ENCODE measurements at regions of chr20 and their contacts with region 1.

Region 1: GRCh38 chr20:49610701-49611538 is 43.0 kb upstream of the PTGIS start:
- H3K4me3 ChIP-seq: peak overlapping the region; percentile 21
- H3K27ac ChIP-seq: no peak overlapping the region
- H3K4me1 ChIP-seq: no peaks in the 10 kb centered on the region
- CTCF ChIP-seq: peak; percentile 100

Region 2: GRCh38 chr20:49534255-49534712 is 76.6 kb before region 1 on chr20:
- CTCF ChIA-PET with region 1: interaction called, 297 read pairs
- POLR2A ChIA-PET with region 1: no interaction called
- H3K4me3 ChIP-seq: no peak overlapping the region
- H3K27ac ChIP-seq: no peak overlapping the region
- H3K4me1 ChIP-seq: no peaks in the 10 kb centered on the region
- CTCF ChIP-seq: 0 out of 2 replicates have a peak, but pooled peaks have one; percentile 32

Region 3: DNA sequence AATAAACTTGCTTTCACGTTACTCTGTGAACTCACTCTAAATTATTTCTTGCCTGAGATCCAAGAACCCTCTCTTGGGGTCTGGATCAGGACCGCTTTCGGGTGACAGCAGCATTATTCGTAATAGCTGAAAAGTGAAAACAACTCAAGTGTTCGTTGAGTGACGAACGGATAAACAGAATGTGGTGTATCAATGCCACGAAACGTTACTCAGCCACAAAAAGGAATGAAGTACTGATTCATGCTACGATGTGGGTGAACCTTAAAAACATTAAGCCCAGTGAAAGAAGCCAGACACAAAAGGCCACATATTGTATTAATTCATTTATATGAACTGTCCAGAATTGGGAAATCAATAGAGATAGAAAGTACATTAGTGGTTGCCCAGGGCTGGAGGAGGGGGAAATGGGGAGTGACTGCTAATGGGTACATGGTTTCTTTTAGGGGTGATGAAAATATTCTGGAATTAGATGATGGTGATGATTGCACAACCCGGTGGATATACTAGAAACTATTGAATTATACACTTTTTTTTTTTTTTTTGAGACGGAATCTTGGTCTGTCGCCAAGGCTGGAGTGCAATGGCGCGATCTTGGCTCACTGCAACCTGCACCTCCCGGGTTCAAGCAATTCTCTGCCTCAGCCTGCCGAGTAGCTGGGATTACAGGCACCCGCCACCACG is 51.4 kb before region 1 on chr20:
- CTCF ChIA-PET with region 1: interaction called, 18 read pairs
- POLR2A ChIA-PET with region 1: no interaction called
- H3K4me3 ChIP-seq: no peak overlapping the region
- H3K27ac ChIP-seq: no peak overlapping the region
- H3K4me1 ChIP-seq: no peaks in the 10 kb centered on the region
- CTCF ChIP-seq: no peak

Region 4: DNA sequence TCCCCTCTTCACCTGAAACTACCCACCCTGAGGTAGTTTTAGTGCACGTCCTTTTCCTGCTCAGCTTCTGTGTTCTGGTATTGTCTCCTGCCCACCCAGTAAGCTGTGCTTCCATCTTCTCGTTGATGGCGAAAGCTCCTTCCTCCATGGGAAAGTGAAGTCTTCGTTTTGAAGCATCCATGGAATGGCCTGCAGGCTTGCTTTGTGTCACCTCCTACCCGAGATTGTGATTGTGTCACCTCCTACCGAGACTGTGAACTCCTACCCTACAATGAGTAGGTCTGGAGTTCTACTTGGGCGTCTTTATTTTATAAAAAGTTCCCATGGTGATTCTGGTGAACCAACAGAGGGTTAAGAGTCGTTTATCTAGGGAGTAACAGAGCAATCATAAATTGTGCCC is 227.6 kb after region 1 on chr20:
- CTCF ChIA-PET with region 1: interaction called, 13 read pairs
- POLR2A ChIA-PET with region 1: interaction called, 3 read pairs
- H3K4me3 ChIP-seq: no peak overlapping the region
- H3K27ac ChIP-seq: no peak overlapping the region
- H3K4me1 ChIP-seq: no peaks in the 10 kb centered on the region
- CTCF ChIP-seq: no peak

Region 5: DNA sequence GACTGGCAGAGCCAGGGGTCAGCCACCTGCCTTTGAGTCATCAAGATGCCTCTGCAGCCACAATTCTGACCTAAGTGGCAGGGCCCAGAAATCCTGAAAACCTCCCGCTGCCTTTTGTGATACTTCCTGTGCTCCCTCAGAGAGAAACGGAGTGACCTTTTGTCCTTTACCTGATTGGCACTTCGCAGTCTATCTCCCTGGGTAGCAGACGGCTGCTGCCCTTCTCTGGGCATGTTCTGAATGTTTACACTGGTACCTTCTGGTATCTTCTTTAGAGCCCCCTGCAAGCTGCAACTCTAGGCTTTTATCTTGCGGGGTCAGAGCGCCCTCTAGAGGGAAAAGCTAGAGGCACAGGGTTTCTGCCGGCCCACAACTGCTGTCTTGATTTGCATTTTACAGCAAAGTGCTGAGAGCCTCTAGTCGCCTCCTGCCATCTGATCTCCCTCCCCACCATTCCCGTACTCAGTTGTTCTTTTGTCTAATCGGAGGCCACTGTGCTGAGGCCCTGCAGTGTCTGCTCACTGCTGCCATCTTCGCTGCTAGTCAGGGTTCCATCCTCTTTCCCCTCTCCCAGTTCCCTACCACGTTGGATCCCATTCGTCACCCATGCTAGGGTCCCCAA is 277.5 kb after region 1 on chr20:
- CTCF ChIA-PET with region 1: interaction called, 56 read pairs
- POLR2A ChIA-PET with region 1: interaction called, 3 read pairs
- H3K4me3 ChIP-seq: no peak overlapping the region
- H3K27ac ChIP-seq: no peak overlapping the region
- H3K4me1 ChIP-seq: no peaks in the 10 kb centered on the region
- CTCF ChIP-seq: peak; percentile 85

Measured in HEK293 (cell line).